Thyroid gland (tissue), 4 donors: ENCODE measurements at regions of chr2 and their contacts with region 1.

Region 1: GRCh38 chr2:63344575-63345284 is 243.5 kb downstream of the WDPCP start:
- DNase-seq: no peak
- H3K4me3 ChIP-seq: no peak overlapping the region
- H3K27ac ChIP-seq: no peak overlapping the region
- H3K4me1 ChIP-seq: no peaks in the 10 kb centered on the region
- H3K27me3 ChIP-seq: no peaks in the 10 kb centered on the region
- CTCF ChIP-seq: no peak
- POLR2A ChIP-seq: no peak

Region 2: GRCh38 chr2:63643486-63643885 is 298.8 kb after region 1 on chr2:
- intact Hi-C with region 1: loop called (anchors 10 kb)
- DNase-seq: no peak
- H3K4me3 ChIP-seq: no peak overlapping the region
- H3K27ac ChIP-seq: no peak overlapping the region
- H3K4me1 ChIP-seq: no peaks in the 10 kb centered on the region
- H3K27me3 ChIP-seq: no peaks in the 10 kb centered on the region
- CTCF ChIP-seq: no peak
- POLR2A ChIP-seq: no peak